IMR-90 (cell line): ENCODE measurements at regions of chr15 and their contacts with region 1.

Region 1: DNA sequence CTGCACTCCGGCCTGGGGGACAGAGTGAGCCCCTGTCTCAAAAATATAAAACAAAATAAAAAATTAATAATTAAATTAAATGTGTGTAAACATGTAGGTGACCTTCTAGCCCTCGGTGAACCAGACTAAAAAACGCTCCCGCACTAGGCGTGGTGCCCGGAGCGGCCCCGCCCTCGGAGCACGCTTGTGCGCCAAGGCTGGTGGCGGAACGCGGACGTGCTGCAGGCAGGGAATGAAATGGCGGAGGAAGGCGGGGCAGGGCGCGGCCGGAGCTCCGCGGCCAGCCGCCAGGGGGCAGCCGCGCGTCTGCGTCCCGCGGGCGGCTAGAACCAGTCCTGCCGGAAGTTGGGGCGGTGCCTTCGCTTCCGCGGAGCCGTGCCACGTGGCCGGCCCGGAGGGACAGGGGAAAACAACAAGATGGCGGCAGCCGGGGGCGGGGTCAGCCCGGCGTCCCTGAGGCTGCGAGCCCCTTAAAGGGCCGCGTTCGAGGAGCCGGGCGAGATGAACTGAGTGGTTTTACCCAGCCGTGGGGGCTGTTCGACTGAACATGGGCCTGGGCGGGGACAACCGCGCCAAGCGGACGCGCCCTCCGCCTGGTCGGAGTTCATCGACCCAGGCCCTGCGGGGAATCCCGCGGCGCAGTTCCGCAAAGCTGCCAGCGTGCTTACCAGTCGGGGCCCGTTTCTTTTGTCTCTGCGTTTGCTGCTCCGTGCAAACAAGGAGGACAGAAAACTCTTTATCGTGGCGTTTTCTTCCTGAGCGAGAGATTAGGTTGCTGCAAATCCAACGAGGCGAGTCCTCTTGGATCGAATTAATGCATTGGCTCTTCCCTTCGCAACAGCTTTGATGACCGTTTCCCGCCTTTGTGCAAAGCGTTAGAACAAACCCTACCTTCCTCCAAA is 90.9 kb upstream of the CHD2 start:
- DNase-seq: peak; percentile 96
- ATAC-seq: peak; percentile 77
- H3K4me3 ChIP-seq: peak overlapping the region; percentile 44
- H3K27ac ChIP-seq: peak overlapping the region; percentile 91
- H3K4me1 ChIP-seq: peaks cover 11% of the 10 kb centered on the region
- H3K27me3 ChIP-seq: no peaks in the 10 kb centered on the region
- CTCF ChIP-seq: peak; percentile 98
- POLR2A ChIP-seq: peak; percentile 71; the same call in 1 of the 2 replicates
- RAD21 ChIP-seq: peak; percentile 91

Region 2: GRCh38 chr15:90994417-90995311 is 1814.6 kb before region 1 on chr15 and contains the start of gene PRC1:
- CTCF ChIA-PET with region 1: no interaction called
- POLR2A ChIA-PET with region 1: interaction called, 3 read pairs
- dilution Hi-C with region 1: no loop called
- in situ Hi-C with region 1: loop called (anchors 25 kb)
- intact Hi-C with region 1: no loop called
- DNase-seq: peak; percentile 97
- ATAC-seq: peak; percentile 98
- H3K4me3 ChIP-seq: peak within 1 kb of the TSS; percentile 96
- H3K27ac ChIP-seq: peak within 1 kb of the TSS; percentile 72
- H3K4me1 ChIP-seq: no peaks in the 10 kb centered on the region
- H3K27me3 ChIP-seq: no peaks in the 10 kb centered on the region
- CTCF ChIP-seq: no peak
- POLR2A ChIP-seq: peak; percentile 83
- RAD21 ChIP-seq: no peak
- total RNA-seq, gene PRC1: 148 and 208 TPM in 2 replicates

Region 3: GRCh38 chr15:92881802-92882696 is 72.8 kb after region 1 on chr15:
- CTCF ChIA-PET with region 1: interaction called, 3 read pairs
- POLR2A ChIA-PET with region 1: interaction called, 19 read pairs
- dilution Hi-C with region 1: no loop called
- in situ Hi-C with region 1: loop called (anchors 5 kb)
- intact Hi-C with region 1: loop called (anchors 1 kb)
- DNase-seq: peak; percentile 100
- ATAC-seq: peak; percentile 94
- H3K4me3 ChIP-seq: peak overlapping the region; percentile 99
- H3K27ac ChIP-seq: peak overlapping the region; percentile 82
- H3K4me1 ChIP-seq: peaks cover 7% of the 10 kb centered on the region
- H3K27me3 ChIP-seq: no peaks in the 10 kb centered on the region
- CTCF ChIP-seq: no peak
- POLR2A ChIP-seq: 0 out of 2 replicates have a peak, but pooled peaks have one; percentile 44
- RAD21 ChIP-seq: no peak

Region 4: DNA sequence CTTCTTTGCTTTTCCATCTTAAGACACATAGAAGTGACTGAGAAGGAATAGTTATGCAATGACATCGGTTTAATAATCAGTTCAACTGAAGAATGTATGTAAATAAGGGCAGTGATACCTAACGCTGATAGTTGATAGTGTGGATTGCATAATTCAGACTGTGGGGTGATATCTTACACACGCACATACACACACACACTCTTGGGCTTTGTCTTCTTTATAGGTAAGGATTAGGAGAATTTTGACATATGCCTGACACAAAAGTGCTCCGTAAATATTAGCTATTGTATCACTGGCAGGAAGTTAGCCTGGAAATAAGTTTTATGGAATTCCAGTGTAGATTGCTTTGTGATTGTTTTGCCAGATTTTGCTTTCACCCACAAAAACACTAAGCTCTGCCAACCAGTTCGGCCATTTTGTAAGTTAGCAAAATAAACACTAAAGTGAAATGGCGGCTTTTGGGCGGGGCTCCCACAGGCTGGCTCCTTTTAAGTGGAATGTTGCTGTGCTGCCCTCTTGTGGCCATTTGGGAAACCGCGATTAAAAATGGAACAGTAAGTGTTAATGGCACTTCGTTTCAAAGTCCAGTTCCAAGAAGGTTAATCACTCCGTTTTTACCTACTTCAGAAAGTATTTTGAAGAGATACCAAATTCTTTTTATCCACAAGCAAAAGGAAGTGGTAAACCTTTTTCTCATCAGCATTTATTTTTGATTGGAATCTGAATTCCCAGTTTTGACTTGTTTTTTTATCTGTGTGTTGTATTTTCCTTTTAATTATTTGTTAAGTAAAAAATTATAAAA is 108.6 kb after region 1 on chr15:
- CTCF ChIA-PET with region 1: interaction called, 6 read pairs
- POLR2A ChIA-PET with region 1: no interaction called
- dilution Hi-C with region 1: no loop called
- in situ Hi-C with region 1: loop called (anchors 5 kb)
- intact Hi-C with region 1: loop called (anchors 1 kb)
- DNase-seq: peak; percentile 93
- ATAC-seq: peak; percentile 61
- H3K4me3 ChIP-seq: no peak overlapping the region
- H3K27ac ChIP-seq: peak overlapping the region; percentile 88; the same call in 1 of the 2 replicates
- H3K4me1 ChIP-seq: peaks cover 31% of the 10 kb centered on the region
- H3K27me3 ChIP-seq: no peaks in the 10 kb centered on the region
- CTCF ChIP-seq: peak; percentile 94
- POLR2A ChIP-seq: peak; percentile 33; the same call in 1 of the 2 replicates
- RAD21 ChIP-seq: peak; percentile 85

Region 5: DNA sequence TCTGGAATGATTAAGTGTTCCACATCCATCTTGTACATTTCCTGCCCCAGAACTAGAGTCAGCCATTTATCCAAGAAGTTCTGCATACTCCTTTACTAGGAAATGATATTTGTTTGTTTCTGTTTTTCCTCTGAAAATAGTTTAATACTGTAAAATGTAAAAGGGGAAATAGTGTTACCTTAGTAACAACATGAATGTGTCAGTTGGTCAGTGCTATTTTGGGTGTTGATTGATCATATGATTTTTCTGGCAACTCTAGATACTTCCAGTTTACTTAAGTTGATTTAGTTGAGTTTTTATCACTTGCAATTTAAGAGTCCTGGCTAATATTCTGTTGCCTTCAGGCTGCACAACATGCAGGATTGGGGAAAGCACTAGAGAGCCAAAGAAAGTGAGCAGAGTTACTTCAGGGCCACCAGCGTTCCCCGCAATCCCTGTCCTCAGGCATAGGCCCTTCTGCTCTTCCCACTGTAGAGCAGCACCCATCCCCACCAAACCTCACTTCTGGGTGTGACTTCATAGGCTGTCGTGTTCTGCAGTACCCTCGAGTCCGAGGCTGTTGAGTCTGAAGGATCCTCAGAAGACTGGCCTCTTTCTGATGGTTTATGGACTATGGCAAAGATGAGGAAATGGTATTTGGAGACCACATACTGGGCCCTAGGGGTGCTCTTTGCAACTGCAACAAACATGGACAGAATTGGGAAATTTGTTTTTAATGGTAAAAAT is 159.9 kb after region 1 on chr15:
- CTCF ChIA-PET with region 1: no interaction called
- POLR2A ChIA-PET with region 1: interaction called, 16 read pairs
- dilution Hi-C with region 1: no loop called
- in situ Hi-C with region 1: no loop called
- intact Hi-C with region 1: no loop called
- DNase-seq: no peak
- ATAC-seq: no peak
- H3K4me3 ChIP-seq: no peak overlapping the region
- H3K27ac ChIP-seq: no peak overlapping the region
- H3K4me1 ChIP-seq: peaks cover 3% of the 10 kb centered on the region; the same call in 1 of the 2 replicates
- H3K27me3 ChIP-seq: no peaks in the 10 kb centered on the region
- CTCF ChIP-seq: no peak
- POLR2A ChIP-seq: no peak
- RAD21 ChIP-seq: no peak

Region 6: GRCh38 chr15:93331545-93332167 is 522.4 kb after region 1 on chr15:
- CTCF ChIA-PET with region 1: no interaction called
- POLR2A ChIA-PET with region 1: no interaction called
- dilution Hi-C with region 1: no loop called
- in situ Hi-C with region 1: no loop called
- intact Hi-C with region 1: no loop called
- DNase-seq: no peak
- ATAC-seq: no peak
- H3K4me3 ChIP-seq: no peak overlapping the region
- H3K27ac ChIP-seq: no peak overlapping the region
- H3K4me1 ChIP-seq: no peaks in the 10 kb centered on the region
- H3K27me3 ChIP-seq: no peaks in the 10 kb centered on the region
- CTCF ChIP-seq: no peak
- POLR2A ChIP-seq: no peak
- RAD21 ChIP-seq: no peak